Right ventricle myocardium superior (tissue), 1 donor: ENCODE measurements at regions of chr15 and their contacts with region 1.

Region 1: DNA sequence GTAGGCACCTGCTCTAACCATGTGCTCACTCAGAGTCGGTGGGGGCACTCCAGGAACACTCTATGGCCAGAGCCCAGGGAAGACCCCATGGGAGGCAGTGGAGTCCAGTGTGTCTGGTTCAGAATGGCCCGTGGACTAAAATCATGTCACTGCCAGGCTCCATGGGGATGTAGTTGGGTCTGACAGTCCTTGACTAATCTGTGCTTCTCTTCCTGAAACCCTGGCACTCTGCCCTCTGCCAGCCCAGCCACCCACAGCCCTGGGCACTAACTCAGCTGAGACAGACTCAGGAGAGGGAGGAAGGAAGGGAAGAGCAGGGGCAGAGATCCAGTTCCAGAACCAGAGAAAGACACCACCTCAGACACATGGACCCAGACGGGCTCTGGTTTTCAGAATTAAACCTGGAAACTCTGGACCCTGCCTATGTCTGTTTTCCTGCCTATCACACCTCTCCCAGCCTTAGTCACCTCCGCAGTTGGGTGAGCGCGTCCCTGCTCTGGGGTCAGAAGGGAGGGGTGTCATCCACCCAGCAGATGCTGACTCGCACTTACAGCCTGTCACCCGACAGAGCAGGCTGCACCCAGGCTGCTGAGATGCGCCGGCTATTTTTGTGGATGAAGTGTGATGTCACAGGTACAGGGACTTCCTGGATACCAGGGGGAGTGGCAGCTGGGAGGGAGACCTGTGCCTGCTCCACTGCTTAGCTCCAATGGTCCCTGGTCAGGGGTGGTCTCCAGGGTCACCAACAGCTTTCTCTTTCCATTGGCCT is 56.8 kb upstream of the INSYN1 start:
- DNase-seq: no peak
- ATAC-seq: peak; percentile 72

Region 2: GRCh38 chr15:73677146-73677607 is 132.7 kb before region 1 on chr15:
- intact Hi-C with region 1: no loop called
- DNase-seq: peak; percentile 65
- ATAC-seq: peak; percentile 89

Region 3: GRCh38 chr15:73866881-73867410 is 57.0 kb after region 1 on chr15:
- intact Hi-C with region 1: loop called (anchors 5 kb)
- DNase-seq: no peak
- ATAC-seq: no peak